Activated CD4-positive, alpha-beta T cell treated with anti-CD3 and anti-CD28 coated beads, Interleukin-2, amount 10 ng/mL, durations not matched to agents 7 days and 5 days (primary cell): ENCODE measurements at regions of chr9 and their contacts with region 1.

Region 1: DNA sequence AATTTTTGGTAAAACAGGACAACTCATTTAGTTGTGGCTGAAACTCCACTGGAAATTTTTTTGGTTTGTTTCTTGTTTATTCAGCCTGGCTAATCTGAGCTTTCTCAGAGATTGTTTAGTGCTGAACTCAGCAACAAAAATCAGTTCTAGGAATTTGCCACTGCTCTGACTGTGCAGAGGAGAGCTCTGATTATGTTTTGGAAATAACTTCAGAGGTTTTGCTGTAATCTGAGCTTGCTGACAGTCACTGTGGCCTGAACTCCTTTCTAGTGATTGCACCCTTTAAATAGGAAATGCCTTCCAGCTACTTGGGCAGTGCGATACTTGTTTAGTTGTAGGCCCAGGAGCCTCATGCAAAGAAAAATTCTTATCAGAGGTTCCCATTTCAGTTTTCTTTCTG is 60.2 kb downstream of the OSTF1 start:
- DNase-seq: peak; percentile 40
- H3K4me3 Mint-ChIP-seq: peak overlapping the region; percentile 59
- H3K27ac Mint-ChIP-seq: peak overlapping the region; percentile 92
- H3K4me1 Mint-ChIP-seq: peaks cover 75% of the 10 kb centered on the region
- H3K27me3 Mint-ChIP-seq: no peaks in the 10 kb centered on the region

Region 2: GRCh38 chr9:75088260-75088905 is 60.2 kb before region 1 on chr9 and contains the start of gene OSTF1:
- CTCF ChIA-PET with region 1: interaction called, 3 read pairs
- POLR2A ChIA-PET with region 1: interaction called, 13 read pairs
- DNase-seq: peak; percentile 92
- H3K4me3 Mint-ChIP-seq: peak within 1 kb of the TSS; percentile 98
- H3K27ac Mint-ChIP-seq: peak within 1 kb of the TSS; percentile 96
- H3K4me1 Mint-ChIP-seq: peaks cover 60% of the 10 kb centered on the region
- H3K27me3 Mint-ChIP-seq: no peaks in the 10 kb centered on the region
- total RNA-seq, gene OSTF1: 117 to 139 TPM